Colonic mucosa (tissue), 4 donors: ENCODE measurements at regions of chr14 and their contacts with region 1.

Region 1: GRCh38 chr14:77067632-77068514 is 30.2 kb upstream of the CIPC start:
- DNase-seq: peak; percentile 64
- H3K4me3 ChIP-seq: no peak overlapping the region
- H3K27ac ChIP-seq: no peak overlapping the region
- H3K4me1 ChIP-seq: no peaks in the 10 kb centered on the region
- H3K27me3 ChIP-seq: no peaks in the 10 kb centered on the region
- CTCF ChIP-seq: peak; percentile 75

Region 2: GRCh38 chr14:75960231-75960630 is 1107.6 kb before region 1 on chr14:
- intact Hi-C with region 1: no loop called
- DNase-seq: no peak
- H3K4me3 ChIP-seq: no peak overlapping the region
- H3K27ac ChIP-seq: no peak overlapping the region
- H3K4me1 ChIP-seq: no peaks in the 10 kb centered on the region
- H3K27me3 ChIP-seq: no peaks in the 10 kb centered on the region
- CTCF ChIP-seq: no peak

Region 3: GRCh38 chr14:76720382-76720813 is 347.5 kb before region 1 on chr14:
- intact Hi-C with region 1: no loop called
- DNase-seq: peak; percentile 51
- H3K4me3 ChIP-seq: no peak overlapping the region
- H3K27ac ChIP-seq: no peak overlapping the region
- H3K4me1 ChIP-seq: no peaks in the 10 kb centered on the region
- H3K27me3 ChIP-seq: no peaks in the 10 kb centered on the region
- CTCF ChIP-seq: no peak

Region 4: DNA sequence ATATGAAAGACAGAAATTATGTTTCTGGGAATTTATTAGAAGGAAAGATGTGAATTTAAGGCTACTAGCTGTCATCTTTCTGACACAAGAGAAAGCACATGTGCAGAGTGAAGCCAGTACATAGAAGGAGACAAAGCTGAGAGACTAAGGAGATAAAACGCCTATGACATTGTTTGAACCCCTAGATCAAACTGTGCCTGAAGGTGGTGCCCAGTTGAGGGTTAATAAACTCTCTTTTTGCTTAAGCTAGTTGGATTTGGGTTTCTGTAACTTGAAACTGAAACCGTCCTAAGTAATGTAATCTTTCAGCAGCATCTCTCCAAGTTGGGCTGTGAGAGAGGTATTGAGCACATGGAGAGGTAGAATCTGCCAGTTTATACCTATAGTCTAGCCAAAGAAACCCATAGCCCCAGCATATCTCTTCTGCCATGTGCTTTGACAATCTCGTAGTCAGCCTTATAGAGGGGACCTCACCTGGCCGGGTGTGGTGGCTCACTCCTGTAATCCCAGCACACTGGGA is 157.4 kb before region 1 on chr14:
- intact Hi-C with region 1: loop called (anchors 5 kb)
- DNase-seq: no peak
- H3K4me3 ChIP-seq: no peak overlapping the region
- H3K27ac ChIP-seq: no peak overlapping the region
- H3K4me1 ChIP-seq: no peaks in the 10 kb centered on the region
- H3K27me3 ChIP-seq: no peaks in the 10 kb centered on the region
- CTCF ChIP-seq: no peak

Region 5: GRCh38 chr14:76995279-76996005 is 72.4 kb before region 1 on chr14:
- intact Hi-C with region 1: no loop called
- DNase-seq: no peak
- H3K4me3 ChIP-seq: no peak overlapping the region
- H3K27ac ChIP-seq: no peak overlapping the region
- H3K4me1 ChIP-seq: no peaks in the 10 kb centered on the region
- H3K27me3 ChIP-seq: no peaks in the 10 kb centered on the region
- CTCF ChIP-seq: no peak